RWPE1 (cell line): ENCODE measurements at regions of chr1 and their contacts with region 1.

Region 1: GRCh38 chr1:153288634-153289275 is 24.0 kb downstream of the PGLYRP3 start:
- DNase-seq: peak; percentile 77
- H3K27ac ChIP-seq: no peak overlapping the region
- CTCF ChIP-seq: peak; percentile 59

Region 2: DNA sequence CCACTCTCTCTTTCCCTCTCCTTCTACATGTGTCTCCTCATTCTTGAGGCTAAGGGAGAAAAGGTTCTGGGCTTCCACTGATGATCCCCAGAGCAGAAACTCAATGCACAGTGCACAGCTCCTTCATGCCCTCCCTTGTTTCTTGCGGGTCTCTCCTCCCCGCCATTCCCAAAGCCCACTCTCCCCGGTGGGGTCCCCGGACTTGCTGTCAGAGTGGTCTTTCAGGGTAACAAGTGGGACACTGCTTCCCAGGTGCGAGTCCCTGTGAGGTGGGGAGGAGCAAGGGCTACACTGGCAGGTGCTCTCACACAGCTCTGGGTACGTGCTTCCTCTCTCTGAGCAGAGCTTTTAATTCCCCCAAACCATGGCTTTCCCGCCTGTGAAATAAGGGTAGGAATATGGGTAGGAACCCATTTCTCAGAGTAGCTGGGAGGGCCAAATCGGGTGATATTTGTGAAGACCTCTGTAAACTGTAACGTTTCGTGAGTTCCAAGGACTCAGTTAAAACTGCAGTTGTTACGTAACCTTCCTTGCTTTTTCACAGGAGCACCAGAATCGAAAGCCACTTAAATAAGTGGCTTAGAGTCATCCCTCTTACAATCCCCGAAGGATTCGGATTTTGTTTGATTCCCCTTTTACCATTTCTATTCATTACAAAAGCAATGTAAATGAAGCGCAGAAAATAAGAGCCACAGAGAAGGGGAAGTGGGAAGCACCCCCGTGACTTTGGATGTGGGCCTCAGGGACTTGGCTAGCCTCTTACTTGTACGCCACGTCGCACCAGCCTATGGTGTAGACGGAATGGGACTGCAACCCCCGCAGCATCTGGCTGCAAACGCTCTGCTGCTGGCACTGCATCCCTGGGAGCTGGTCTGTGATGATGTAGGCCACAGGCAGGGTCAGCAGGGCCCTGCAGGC is 17.8 kb after region 1 on chr1:
- CTCF ChIA-PET with region 1: interaction called, 10 read pairs
- POLR2A ChIA-PET with region 1: no interaction called
- DNase-seq: no peak
- H3K27ac ChIP-seq: no peak overlapping the region
- CTCF ChIP-seq: no peak